WTC11 (cell line): ENCODE measurements at regions of chr3 and their contacts with region 1.

Region 1: GRCh38 chr3:113275929-113276750 is 64.8 kb downstream of the BOC start:
- DNase-seq: no peak
- ATAC-seq: peak; percentile 43
- H3K4me3 Mint-ChIP-seq: no peak overlapping the region
- H3K27ac Mint-ChIP-seq: peak overlapping the region; percentile 82
- H3K4me1 Mint-ChIP-seq: peaks cover 17% of the 10 kb centered on the region
- H3K27me3 Mint-ChIP-seq: no peaks in the 10 kb centered on the region
- CTCF ChIP-seq: no peak

Region 2: GRCh38 chr3:113264283-113265131 is 11.6 kb before region 1 on chr3:
- CTCF ChIA-PET with region 1: interaction called, 36 read pairs
- POLR2A ChIA-PET with region 1: no interaction called
- DNase-seq: peak; percentile 58
- ATAC-seq: peak; percentile 95
- H3K4me3 Mint-ChIP-seq: 0 out of 2 replicates have a peak overlapping the region, but pooled peaks have one; percentile 2
- H3K27ac Mint-ChIP-seq: peak overlapping the region; percentile 64
- H3K4me1 Mint-ChIP-seq: peaks cover 50% of the 10 kb centered on the region
- H3K27me3 Mint-ChIP-seq: peaks cover 2% of the 10 kb centered on the region; the same call in 1 of the 2 replicates
- CTCF ChIP-seq: no peak

Region 3: DNA sequence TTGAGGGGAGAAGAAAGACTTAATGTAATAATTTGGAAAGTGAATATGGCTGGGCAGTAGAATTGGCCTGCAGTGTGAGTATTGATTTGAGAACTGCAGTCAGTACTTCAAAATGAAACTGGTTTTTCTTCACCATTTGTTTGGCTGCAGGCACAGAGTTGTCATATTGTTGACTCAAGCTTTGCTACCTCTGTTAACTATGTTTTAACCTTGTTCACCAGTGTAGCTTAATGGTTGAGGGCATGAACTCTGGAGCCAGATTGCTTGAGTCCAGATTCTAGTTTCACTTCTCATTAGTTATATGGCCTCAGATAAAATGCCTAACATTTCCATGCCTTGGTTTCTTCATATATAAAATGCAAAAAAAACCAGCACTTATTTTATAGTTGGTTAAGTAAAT is 101.0 kb after region 1 on chr3:
- CTCF ChIA-PET with region 1: no interaction called
- POLR2A ChIA-PET with region 1: no interaction called
- DNase-seq: no peak
- ATAC-seq: no peak
- H3K4me3 Mint-ChIP-seq: no peak overlapping the region
- H3K27ac Mint-ChIP-seq: no peak overlapping the region
- H3K4me1 Mint-ChIP-seq: no peaks in the 10 kb centered on the region
- H3K27me3 Mint-ChIP-seq: no peaks in the 10 kb centered on the region; the same call in 1 of the 2 replicates
- CTCF ChIP-seq: no peak